WTC11 (cell line): ENCODE measurements at regions of chr20 and their contacts with region 1.

Region 1: DNA sequence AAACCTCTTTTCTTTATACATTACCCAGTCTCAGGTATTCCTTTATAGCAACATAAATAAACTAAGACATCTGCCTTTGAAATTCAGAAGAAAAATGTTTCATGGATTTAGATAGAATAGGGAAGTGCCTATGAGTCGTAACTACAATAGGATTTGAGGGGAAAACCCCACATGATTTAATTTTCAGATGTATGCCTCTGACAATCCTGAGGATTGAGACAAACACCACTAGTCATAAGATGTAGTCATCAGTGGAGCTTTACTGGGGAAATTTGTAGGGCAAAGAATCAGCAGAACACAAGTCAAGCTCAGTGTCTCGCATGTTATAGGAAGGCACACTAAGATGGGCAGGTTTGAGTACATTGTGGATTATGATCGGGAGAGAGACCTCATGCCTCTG is 566.4 kb downstream of the BMP2 start:
- DNase-seq: no peak
- ATAC-seq: no peak
- H3K4me3 Mint-ChIP-seq: no peak overlapping the region
- H3K27ac Mint-ChIP-seq: no peak overlapping the region
- H3K4me1 Mint-ChIP-seq: peaks cover 6% of the 10 kb centered on the region
- H3K27me3 Mint-ChIP-seq: no peaks in the 10 kb centered on the region
- CTCF ChIP-seq: no peak

Region 2: DNA sequence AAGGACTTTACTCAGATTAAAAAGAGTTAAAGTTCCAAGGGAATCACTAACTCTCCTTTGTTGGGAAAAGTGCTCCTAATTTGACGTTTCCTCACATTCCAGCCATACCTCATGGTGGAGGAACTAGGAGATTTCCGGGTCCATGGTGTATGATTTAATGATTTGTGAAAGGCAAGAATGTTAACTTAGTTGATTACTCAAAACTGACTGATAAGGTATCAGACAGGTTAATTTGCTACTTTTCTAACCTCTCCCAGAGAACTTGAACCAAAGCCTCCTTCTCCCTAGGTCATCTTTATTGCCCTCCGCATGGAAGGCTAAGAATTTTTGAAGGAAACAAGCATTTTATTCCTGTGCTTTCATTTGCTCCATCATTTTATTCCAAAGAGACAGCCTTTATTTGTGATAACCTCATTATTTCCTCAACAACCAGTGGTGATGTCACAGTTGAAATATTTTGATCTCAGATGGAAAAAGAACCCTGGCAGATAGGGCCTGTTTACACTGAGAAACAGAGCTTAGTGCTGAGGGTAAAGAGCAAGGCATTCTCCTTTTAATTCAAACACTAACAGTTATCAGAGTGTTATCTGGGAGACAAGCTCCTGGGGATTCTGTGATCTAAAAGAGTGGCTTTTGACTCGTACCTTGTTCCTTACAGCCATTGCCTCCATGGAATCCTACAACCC is 623.8 kb before region 1 on chr20:
- CTCF ChIA-PET with region 1: no interaction called
- POLR2A ChIA-PET with region 1: interaction called, 10 read pairs
- DNase-seq: no peak
- ATAC-seq: no peak
- H3K4me3 Mint-ChIP-seq: no peak overlapping the region
- H3K27ac Mint-ChIP-seq: no peak overlapping the region
- H3K4me1 Mint-ChIP-seq: peaks cover 13% of the 10 kb centered on the region
- H3K27me3 Mint-ChIP-seq: no peaks in the 10 kb centered on the region
- CTCF ChIP-seq: no peak